HCT116 (cell line): ENCODE measurements at regions of chr1 and their contacts with region 1.

Region 1: DNA sequence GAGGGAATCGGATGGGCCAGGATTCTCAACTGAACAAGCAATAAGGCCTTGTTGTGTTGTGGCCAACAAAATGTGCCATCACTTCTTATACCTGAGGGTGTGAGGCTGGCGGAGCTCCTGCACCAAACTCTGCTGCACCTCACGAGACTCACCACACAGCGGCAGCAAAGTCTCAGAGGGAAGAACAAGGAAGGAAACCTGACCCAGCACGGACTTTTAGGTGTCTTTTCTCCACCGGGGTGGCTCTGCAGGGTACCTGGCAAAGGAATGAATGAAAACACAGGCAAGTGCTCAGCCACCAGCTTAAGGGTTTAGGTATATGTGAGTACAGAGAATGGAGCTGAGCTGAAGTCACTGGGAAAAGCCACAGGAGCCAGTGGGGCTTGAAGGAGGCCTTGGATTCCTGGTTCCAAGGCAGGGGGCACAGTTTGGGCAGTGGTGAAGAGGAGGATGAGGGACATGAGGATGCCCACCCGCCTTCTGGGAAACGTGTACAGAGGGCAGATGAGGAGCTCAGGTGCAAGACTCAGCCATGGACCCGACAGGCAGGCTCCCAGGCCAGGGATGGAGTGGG is 31.1 kb upstream of the HSD3B1 start:
- DNase-seq: peak; percentile 33
- ATAC-seq: peak; percentile 99
- H3K4me3 ChIP-seq: no peak overlapping the region
- H3K27ac ChIP-seq: no peak overlapping the region
- H3K4me1 ChIP-seq: peaks cover 0 to 4% of the 10 kb centered on the region in 2 experiments; a peak in 2 of 4 replicates
- H3K27me3 ChIP-seq: 0 out of 2 replicates have a peak, but pooled peaks cover 4% of the 10 kb centered on the region
- CTCF ChIP-seq: peak; percentile 59 to 90 (median 75); a peak in 5 of 6 replicates
- POLR2A ChIP-seq: no peak
- RAD21 ChIP-seq: peak; percentile 76

Region 2: DNA sequence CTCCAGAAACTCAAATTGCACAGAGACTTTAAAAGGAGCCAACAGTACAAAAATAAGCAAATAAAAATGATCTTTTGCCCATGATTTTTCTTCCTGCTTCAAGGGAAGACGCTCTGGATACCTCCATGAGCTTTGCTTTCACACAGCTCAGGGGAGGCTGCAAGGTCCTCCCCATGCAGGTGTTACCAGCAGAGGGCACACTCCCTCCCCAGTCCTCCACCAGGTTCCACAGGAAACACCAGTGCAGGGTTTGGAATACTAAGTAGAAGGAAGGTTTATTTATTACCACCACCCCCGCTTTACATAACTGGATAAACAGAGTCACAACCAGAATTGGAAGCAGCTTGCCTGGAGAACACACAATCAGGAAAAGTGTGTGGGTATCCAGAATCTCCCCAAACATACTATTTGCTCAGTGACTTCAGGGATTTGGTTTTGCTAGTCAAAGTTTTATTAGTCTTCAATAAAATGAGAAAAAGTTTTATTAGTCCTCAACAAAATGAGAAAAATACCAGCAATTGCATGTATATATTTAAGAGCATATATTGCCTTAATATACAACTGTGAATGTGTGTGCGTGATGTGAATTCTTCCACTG is 68.3 kb after region 1 on chr1:
- CTCF ChIA-PET with region 1: interaction called, 3 read pairs
- POLR2A ChIA-PET with region 1: no interaction called
- RAD21 ChIA-PET with region 1: no interaction called
- intact Hi-C with region 1: loop called (anchors 5 kb)
- DNase-seq: peak; percentile 35
- ATAC-seq: peak; percentile 98
- H3K4me3 ChIP-seq: no peak overlapping the region
- H3K27ac ChIP-seq: no peak overlapping the region
- H3K4me1 ChIP-seq: no peaks in the 10 kb centered on the region
- H3K27me3 ChIP-seq: peaks cover 12% of the 10 kb centered on the region; the same call in 1 of the 2 replicates
- CTCF ChIP-seq: peak; percentile 41 to 89 (median 81); a peak in 5 of 6 replicates
- POLR2A ChIP-seq: no peak
- RAD21 ChIP-seq: peak; percentile 36

Region 3: DNA sequence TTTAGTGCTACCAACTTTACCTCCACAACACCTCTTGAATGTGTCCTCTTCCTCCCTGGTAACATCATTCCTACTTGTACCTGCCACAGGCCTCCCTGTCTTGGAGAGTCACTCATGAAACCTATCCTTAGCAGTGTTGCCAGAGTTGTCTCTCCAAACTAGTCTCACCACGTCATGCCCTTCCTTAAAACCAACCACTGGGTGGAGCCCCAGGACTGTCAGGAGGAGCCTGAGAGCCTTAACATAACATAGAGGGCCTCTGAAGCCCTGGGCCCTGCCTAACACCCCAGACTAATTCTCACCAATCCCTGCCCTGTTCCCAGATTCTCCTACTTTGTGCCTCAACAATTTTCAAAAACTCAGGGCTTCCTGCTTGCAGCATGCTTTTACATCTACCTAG is 106.8 kb after region 1 on chr1:
- CTCF ChIA-PET with region 1: no interaction called
- POLR2A ChIA-PET with region 1: no interaction called
- RAD21 ChIA-PET with region 1: no interaction called
- intact Hi-C with region 1: no loop called
- DNase-seq: peak; percentile 48
- ATAC-seq: peak; percentile 100
- H3K4me3 ChIP-seq: no peak overlapping the region
- H3K27ac ChIP-seq: no peak overlapping the region
- H3K4me1 ChIP-seq: no peaks in the 10 kb centered on the region
- H3K27me3 ChIP-seq: no peaks in the 10 kb centered on the region
- CTCF ChIP-seq: peak; percentile 57 to 70 (median 66); a peak in 5 of 6 replicates
- POLR2A ChIP-seq: no peak
- RAD21 ChIP-seq: peak; percentile 81